AG04449 (cell line): ENCODE measurements at regions of chr11 and their contacts with region 1.

Region 1: GRCh38 chr11:96054870-96055705 is 131.2 kb upstream of the MTMR2 start:
- DNase-seq: no peak
- H3K4me3 ChIP-seq: no peak overlapping the region
- CTCF ChIP-seq: peak; percentile 46

Region 2: GRCh38 chr11:95867105-95867504 is 188.0 kb before region 1 on chr11:
- CTCF ChIA-PET with region 1: no interaction called
- POLR2A ChIA-PET with region 1: no interaction called
- DNase-seq: no peak
- H3K4me3 ChIP-seq: no peak overlapping the region
- CTCF ChIP-seq: no peak

Region 3: DNA sequence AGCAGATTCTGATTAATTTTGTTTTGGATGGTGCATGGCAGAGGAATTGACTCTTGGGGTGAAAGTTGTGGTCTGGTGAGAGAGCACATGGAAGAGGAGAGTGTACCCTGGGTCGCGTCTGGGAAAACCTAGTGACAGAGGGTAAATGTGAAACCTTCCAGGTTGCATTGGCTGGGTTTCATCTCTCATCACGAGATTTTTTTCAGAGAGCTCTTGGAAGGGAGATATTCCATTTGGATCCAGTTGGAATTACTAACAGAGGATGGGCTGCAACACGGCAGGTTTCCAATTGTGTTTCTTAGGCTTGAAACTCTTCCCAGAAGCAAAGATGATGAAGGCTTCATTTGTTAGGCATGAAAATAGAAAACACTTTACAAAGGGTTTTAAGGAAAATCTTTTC is 21.5 kb before region 1 on chr11:
- CTCF ChIA-PET with region 1: interaction called, 22 read pairs
- POLR2A ChIA-PET with region 1: no interaction called
- DNase-seq: no peak
- H3K4me3 ChIP-seq: no peak overlapping the region
- CTCF ChIP-seq: no peak

Region 4: GRCh38 chr11:96091476-96091875 is 36.4 kb after region 1 on chr11:
- CTCF ChIA-PET with region 1: interaction called, 17 read pairs
- POLR2A ChIA-PET with region 1: no interaction called
- DNase-seq: no peak
- H3K4me3 ChIP-seq: no peak overlapping the region
- CTCF ChIP-seq: no peak

Region 5: DNA sequence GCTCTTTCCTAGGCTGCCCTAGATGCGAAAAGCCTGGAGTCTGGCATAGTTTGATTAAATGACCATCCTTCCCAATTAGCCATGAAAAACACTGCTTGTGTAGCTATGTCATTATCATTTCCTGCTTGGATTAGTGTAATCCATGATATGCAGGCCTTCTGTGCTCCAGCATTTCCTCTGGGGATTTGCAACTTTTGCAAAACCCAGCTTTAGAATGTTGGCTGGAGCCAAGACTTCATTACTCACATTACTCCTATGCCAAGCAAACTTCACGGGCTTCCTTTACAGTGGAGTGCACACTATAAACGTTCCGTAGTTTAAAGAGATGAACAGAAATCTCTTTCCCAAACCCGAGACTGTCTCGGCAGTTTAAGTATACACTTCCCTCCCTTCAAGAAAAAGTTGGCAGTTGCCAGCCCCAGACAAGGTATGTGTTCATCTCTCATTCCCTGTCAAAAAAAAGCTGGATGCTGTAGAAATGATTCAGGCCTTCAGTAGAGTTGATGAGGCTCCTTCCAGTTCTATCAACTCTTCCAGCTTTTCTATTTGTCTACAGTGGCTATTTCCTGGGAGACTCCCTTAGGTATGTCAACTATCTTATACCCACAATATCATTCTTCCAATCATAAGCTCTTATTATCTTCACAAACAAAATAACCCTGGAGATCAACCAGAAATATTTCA is 107.9 kb after region 1 on chr11:
- CTCF ChIA-PET with region 1: interaction called, 12 read pairs
- POLR2A ChIA-PET with region 1: no interaction called
- DNase-seq: no peak
- H3K4me3 ChIP-seq: no peak overlapping the region
- CTCF ChIP-seq: no peak